Posterior vena cava (tissue), 2 donors: ENCODE measurements at regions of chr3 and their contacts with region 1.

Region 1: GRCh38 chr3:99753268-99753975 is 64.2 kb upstream of the CMSS1 start:
- DNase-seq: no peak

Region 2: DNA sequence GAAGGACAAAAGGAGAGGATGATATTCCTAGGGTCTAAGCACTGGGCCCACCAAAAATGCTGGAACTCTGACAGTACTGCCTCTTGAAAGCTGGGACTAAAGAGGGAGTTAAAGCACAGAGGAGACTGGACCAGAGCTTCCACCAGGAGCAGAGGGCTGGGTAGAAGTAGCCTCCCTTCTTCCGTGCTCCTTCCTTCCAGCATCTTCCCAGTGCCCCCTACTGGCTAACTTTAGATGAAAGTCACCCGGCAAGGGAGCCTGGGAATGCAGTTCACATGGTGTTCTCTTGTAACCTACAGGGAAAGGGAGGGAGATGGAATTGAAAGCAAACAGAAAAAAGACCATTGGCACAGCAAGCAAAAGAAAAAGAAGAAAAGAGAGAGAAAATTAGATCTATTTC is 221.2 kb before region 1 on chr3:
- intact Hi-C with region 1: no loop called
- DNase-seq: no peak

Region 3: DNA sequence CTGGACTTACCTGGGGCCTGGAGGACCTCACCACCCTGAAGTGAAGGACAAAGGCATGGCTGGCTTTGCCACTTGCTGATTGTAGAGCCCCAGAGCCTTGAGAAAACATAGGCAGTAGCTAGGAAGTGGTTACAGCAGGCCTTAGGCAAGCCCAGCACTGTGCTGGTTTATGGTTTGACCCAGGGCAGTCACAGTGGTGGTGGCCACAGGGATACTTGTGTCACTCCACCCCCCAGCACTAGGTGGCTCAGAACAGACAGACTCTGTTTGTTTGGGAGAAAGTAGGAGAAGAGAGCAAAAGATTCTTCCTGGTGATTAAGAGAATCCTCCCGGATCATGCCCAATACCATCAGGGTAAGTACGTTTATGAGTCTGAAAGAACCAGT is 128.2 kb before region 1 on chr3:
- intact Hi-C with region 1: no loop called
- DNase-seq: no peak

Region 4: GRCh38 chr3:99731499-99731898 is 21.9 kb before region 1 on chr3:
- intact Hi-C with region 1: no loop called
- DNase-seq: no peak

Region 5: GRCh38 chr3:100073899-100074307 is 320.5 kb after region 1 on chr3:
- intact Hi-C with region 1: loop called in 1 of 2 experiments (anchors 5 kb)
- DNase-seq: no peak

Region 6: GRCh38 chr3:100103558-100104441 is 350.4 kb after region 1 on chr3:
- intact Hi-C with region 1: no loop called
- DNase-seq: no peak